ENCODE measurements at regions of chr10 and their contacts with region 1.

Region 1: GRCh38 chr10:119207367-119207668 is at the start of gene GRK5:
- DNase-seq: peak; percentile 96
- H3K4me3 Mint-ChIP-seq: peak within 1 kb of the TSS; percentile 93
- H3K27ac Mint-ChIP-seq: peak within 1 kb of the TSS; percentile 99
- H3K4me1 Mint-ChIP-seq: peaks cover 49% of the 10 kb centered on the region
- H3K27me3 Mint-ChIP-seq: peaks cover 4% of the 10 kb centered on the region

Region 2: DNA sequence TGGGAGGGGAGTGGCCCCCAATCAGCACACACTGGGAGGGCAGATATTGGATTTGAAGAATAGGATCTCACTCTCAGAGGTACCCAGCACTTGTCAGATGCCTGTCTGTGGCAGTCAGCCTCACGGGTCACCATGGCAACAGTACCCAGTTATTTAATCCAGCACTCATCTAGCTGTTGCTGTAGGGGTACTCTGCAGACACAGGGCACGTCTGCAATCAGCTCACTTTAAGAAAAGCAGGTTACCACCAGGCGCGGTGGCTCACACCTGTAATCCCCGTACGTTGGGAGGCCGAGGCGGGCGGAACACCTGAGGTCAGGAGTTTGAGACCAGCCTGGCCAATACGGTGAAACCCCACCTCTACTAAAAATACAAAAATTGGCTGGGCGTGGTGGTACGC is 53.7 kb before region 1 on chr10:
- CTCF ChIA-PET with region 1: no interaction called
- DNase-seq: no peak
- H3K4me3 Mint-ChIP-seq: no peak overlapping the region
- H3K27ac Mint-ChIP-seq: no peak overlapping the region
- H3K4me1 Mint-ChIP-seq: peaks cover 5% of the 10 kb centered on the region
- H3K27me3 Mint-ChIP-seq: no peaks in the 10 kb centered on the region

Region 3: DNA sequence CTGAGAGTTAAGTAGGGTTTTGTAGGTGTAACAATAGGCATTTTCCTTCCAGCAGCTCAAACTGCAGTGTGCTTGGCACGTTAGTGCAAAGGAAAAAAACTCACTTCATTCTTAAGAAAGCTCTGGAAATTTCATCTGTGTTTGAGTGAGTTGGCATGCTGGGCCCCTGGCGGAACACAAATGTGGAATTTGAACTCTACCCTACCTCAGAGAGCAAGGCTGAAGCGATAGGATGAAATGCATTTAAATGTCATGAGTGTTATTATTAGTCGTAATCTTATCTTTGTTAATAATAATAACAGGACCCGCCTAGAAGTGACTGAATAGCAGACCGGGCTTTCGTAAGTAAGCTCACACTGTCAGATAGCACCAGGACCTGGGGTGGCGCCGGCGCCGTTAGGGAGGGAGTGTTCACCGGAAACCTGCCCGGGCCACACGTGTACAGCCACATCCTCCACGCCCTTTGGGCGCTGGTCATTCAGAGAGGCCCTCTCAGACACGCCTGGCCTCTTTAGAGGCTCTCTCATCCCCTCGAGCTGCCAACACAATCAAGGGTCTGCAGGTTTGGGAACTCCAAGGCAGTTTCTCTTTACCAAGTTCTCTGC is 63.5 kb after region 1 on chr10:
- CTCF ChIA-PET with region 1: interaction called, 11 read pairs
- DNase-seq: peak; percentile 61
- H3K4me3 Mint-ChIP-seq: peak overlapping the region; percentile 21
- H3K27ac Mint-ChIP-seq: peak overlapping the region; percentile 93
- H3K4me1 Mint-ChIP-seq: peaks cover 63% of the 10 kb centered on the region
- H3K27me3 Mint-ChIP-seq: no peaks in the 10 kb centered on the region

Region 4: GRCh38 chr10:119305860-119306513 is 98.7 kb after region 1 on chr10:
- CTCF ChIA-PET with region 1: interaction called, 15 read pairs
- DNase-seq: peak; percentile 86
- H3K4me3 Mint-ChIP-seq: peak overlapping the region; percentile 72
- H3K27ac Mint-ChIP-seq: peak overlapping the region; percentile 99
- H3K4me1 Mint-ChIP-seq: peaks cover 80% of the 10 kb centered on the region
- H3K27me3 Mint-ChIP-seq: peaks cover 28% of the 10 kb centered on the region

Region 5: GRCh38 chr10:119341459-119342301 is 134.4 kb after region 1 on chr10:
- CTCF ChIA-PET with region 1: no interaction called
- DNase-seq: peak; percentile 43
- H3K4me3 Mint-ChIP-seq: no peak overlapping the region
- H3K27ac Mint-ChIP-seq: no peak overlapping the region
- H3K4me1 Mint-ChIP-seq: peaks cover 33% of the 10 kb centered on the region
- H3K27me3 Mint-ChIP-seq: no peaks in the 10 kb centered on the region

Region 6: DNA sequence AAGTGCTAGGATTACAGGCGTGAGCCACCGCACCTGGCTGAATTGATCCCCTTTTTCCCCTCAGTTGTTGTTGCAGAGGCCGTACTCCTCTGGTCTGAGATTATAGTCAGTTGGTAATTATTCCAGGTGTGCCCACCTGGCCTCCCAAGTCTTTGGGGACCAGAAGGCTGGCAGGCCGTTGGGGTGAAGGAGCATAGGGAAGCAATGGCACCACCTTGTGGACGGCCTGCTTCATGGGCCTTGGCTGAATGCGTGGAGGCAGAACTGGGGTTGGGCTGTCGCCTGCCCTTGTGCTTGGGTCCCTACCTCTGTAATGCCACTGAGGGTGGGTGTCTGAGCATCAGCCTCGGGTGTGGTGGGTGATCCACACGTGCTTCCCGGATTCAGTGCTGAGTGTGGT is 209.5 kb after region 1 on chr10:
- CTCF ChIA-PET with region 1: interaction called, 96 read pairs
- DNase-seq: peak; percentile 82
- H3K4me3 Mint-ChIP-seq: no peak overlapping the region
- H3K27ac Mint-ChIP-seq: no peak overlapping the region
- H3K4me1 Mint-ChIP-seq: no peaks in the 10 kb centered on the region
- H3K27me3 Mint-ChIP-seq: no peaks in the 10 kb centered on the region

Region 7: GRCh38 chr10:119542988-119543813 is 335.9 kb after region 1 on chr10:
- CTCF ChIA-PET with region 1: interaction called, 10 read pairs
- DNase-seq: peak; percentile 77
- H3K4me3 Mint-ChIP-seq: peak overlapping the region; percentile 91
- H3K27ac Mint-ChIP-seq: peak overlapping the region; percentile 94
- H3K4me1 Mint-ChIP-seq: peaks cover 42% of the 10 kb centered on the region
- H3K27me3 Mint-ChIP-seq: peaks cover 26% of the 10 kb centered on the region